GM12878 (cell line): ENCODE measurements at regions of chr1 and their contacts with region 1.

Region 1: DNA sequence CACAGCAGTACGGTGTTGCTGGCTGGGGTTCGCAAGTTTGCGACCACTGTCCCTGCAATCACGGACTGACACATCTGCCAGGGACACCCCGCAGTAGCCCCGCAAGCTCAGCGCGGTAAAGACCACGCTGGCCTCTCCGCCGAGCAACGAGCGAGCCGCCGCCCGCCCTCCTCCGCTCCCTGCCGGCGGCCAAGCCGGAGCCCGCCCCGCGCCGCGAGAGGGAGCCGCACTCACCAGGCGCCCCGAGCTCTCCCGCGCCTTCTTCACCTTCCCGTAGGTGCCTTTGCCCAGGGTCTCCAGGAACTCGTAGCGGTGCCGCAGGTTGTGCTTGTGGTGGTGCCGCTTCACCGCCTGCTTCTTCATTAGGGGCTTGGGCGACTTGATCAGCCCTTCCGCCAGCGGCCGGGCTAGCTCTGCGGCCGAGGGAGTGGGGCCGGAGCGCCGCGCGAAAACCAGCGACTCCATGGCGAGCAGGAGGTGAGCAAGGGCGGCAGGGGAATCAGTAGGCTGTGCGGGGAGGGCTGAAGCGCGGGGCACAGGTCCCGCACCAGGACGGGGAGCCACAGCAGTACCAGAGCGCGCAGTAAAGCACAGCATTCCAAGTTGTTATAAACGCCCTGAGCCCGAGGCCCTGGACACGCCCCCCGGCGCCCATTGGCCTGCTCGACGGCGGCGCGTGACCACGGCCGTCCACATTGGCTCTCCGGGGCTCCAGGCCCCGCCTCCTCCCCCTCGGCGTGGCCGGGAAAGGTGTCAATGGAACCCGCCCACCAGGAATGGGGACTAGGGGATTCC is at the start of gene NUAK2:
- DNase-seq: no peak
- ATAC-seq: peak; percentile 85
- H3K4me3 ChIP-seq: peak within 1 kb of the TSS; percentile 36; the same call in 1 of the 2 replicates
- H3K27ac ChIP-seq: no peak within 1 kb of the TSS
- H3K4me1 ChIP-seq: peaks cover 13% of the 10 kb centered on the region
- H3K27me3 ChIP-seq: peaks cover 0 to 8% of the 10 kb centered on the region in 2 experiments; a peak in 3 of 4 replicates
- CTCF ChIP-seq: peak in 1 of 3 experiments; percentile 21; a peak in 1 of 6 replicates
- EP300 ChIP-seq: no peak
- POLR2A ChIP-seq: peak; percentile 44; the same call in 1 of the 2 replicates
- RAD21 ChIP-seq: peak; percentile 9; the same call in 1 of the 2 replicates
- polyA plus RNA-seq, gene NUAK2: 0.27 to 0.31 TPM

Region 2: DNA sequence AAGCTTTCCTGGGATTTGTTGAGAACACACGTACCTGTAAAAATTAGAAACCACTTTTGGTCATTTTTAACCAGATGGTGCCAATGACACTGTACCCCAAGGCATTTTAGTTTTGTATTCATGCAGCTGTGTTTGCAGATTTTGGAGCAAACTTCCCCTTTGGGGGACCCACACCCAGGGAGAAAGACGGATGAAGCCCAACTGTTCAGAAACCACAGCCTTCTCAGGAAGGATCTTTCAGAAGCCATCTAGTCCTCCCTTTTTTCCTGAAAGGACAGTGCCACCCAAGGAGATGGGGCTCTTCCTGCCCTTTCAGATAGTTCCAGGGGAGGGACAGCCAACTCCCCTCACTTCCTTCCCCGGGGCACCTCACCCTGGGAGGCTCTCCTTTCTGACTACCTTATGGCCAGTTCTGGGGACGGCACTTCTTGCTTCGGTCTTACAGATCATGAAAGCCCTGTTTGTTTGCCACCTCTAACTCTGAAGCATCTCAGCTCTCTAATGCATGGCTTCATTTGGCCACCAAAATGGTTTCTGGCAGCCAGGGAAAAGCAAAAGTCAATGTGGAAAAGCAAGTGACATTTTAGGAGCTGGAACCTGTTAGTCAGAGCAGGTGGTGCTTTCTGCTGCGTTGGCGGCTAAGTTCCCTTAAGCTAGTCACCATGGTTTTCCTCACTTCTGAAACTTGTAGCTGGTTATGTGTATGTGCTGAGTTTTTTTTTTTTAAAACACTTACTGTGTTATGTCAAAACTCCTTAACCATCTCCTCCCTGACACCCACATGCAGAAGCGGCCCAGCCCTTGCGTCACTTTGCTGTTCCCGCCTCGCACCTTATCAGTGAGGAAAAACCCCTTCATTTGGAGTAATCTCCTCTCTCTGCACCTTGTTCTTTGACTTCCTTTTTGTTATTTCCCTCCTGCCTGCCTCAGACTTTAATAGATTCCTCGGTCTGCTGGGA is 83.6 kb before region 1 on chr1:
- CTCF ChIA-PET with region 1: interaction called, 10 read pairs
- POLR2A ChIA-PET with region 1: interaction called, 8 read pairs
- RAD21 ChIA-PET with region 1: interaction called, 6 read pairs
- SMC1A ChIA-PET with region 1: interaction called, 11 read pairs
- in situ Hi-C with region 1: no loop called
- intact Hi-C with region 1: no loop called
- DNase-seq: no peak
- ATAC-seq: peak; percentile 70
- H3K4me3 ChIP-seq: no peak overlapping the region
- H3K27ac ChIP-seq: no peak overlapping the region
- H3K4me1 ChIP-seq: peaks cover 18% of the 10 kb centered on the region
- H3K27me3 ChIP-seq: no peaks in the 10 kb centered on the region; a peak in 1 of 4 replicates
- CTCF ChIP-seq: no peak
- EP300 ChIP-seq: no peak; a peak in 1 of 4 replicates
- POLR2A ChIP-seq: no peak
- RAD21 ChIP-seq: no peak

Region 3: DNA sequence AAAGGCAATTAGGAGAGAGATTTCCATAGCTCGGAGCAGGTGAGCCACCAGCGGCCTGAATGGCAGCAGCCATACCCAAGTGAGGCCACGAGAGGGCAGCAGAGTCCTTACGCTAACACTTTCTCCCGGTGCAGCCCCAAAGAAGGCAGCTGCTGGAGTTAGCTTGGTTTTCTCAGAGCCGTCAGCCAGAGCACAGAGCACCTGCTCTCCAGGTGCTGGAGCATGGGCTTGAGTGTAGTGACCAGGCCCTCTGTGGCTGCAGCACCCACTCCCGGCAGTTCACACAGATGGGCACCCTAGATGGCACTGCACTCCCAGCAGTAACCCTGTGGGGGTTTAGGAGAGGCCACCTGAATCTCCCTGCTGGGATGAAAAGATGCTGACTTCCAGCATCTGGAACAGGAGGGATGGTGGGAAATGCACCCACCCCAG is 47.8 kb before region 1 on chr1:
- CTCF ChIA-PET with region 1: interaction called, 2,333 read pairs
- POLR2A ChIA-PET with region 1: interaction called, 91 read pairs
- RAD21 ChIA-PET with region 1: interaction called, 892 read pairs
- SMC1A ChIA-PET with region 1: interaction called, 1,445 read pairs
- in situ Hi-C with region 1: no loop called
- intact Hi-C with region 1: loop called (anchors 1 kb)
- DNase-seq: peak; percentile 32
- ATAC-seq: peak; percentile 90
- H3K4me3 ChIP-seq: no peak overlapping the region
- H3K27ac ChIP-seq: no peak overlapping the region
- H3K4me1 ChIP-seq: peaks cover 3% of the 10 kb centered on the region; the same call in 1 of the 2 replicates
- H3K27me3 ChIP-seq: peaks cover 0 to 2% of the 10 kb centered on the region in 2 experiments; a peak in 1 of 4 replicates
- CTCF ChIP-seq: peak; percentile 92 to 98 (median 98)
- EP300 ChIP-seq: peak in 1 of 2 experiments; percentile 38; a peak in 1 of 4 replicates
- POLR2A ChIP-seq: no peak
- RAD21 ChIP-seq: peak; percentile 96

Region 4: DNA sequence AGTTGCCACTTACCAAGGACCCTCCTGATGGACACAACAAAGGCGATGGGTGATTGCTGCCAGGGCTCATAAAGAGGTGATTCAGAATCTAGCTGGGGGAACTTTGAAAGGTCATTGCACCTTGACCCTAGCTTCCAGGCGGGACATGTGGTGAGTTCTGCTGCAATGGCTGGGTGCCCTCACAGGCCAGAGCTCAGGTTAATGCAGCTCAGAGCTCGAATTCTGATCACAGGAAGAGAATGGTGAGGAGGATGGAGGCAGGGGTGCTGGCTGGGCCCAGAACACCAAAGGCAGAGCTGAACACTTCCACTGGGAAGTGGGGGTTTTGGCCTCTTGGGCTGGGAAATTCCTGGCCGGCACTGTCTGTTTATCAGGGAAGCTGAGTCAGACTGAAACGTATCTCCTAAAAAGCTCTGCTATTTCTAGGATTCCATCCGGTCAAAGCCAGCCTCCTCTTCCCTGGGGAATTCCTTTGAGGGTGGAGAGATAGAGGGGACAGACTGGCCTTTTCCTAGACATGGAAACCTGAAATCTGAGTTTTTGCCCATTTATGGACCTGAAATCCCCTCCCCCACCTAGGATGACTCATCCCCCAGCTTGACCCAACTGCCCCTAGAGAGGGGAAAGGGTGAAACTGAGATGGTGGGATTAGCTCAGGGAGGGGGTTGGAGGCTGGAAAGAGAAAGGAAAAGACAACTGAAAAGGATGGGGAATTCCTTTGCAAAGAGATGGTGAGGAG is 27.0 kb before region 1 on chr1:
- CTCF ChIA-PET with region 1: interaction called, 2,333 read pairs
- POLR2A ChIA-PET with region 1: interaction called, 151 read pairs
- RAD21 ChIA-PET with region 1: interaction called, 527 read pairs
- SMC1A ChIA-PET with region 1: interaction called, 1,445 read pairs
- in situ Hi-C with region 1: no loop called
- intact Hi-C with region 1: no loop called
- DNase-seq: no peak
- ATAC-seq: peak; percentile 69
- H3K4me3 ChIP-seq: no peak overlapping the region
- H3K27ac ChIP-seq: no peak overlapping the region
- H3K4me1 ChIP-seq: peaks cover 6% of the 10 kb centered on the region
- H3K27me3 ChIP-seq: no peaks in the 10 kb centered on the region; a peak in 1 of 4 replicates
- CTCF ChIP-seq: no peak
- EP300 ChIP-seq: peak in 1 of 2 experiments; percentile 46; a peak in 1 of 4 replicates
- POLR2A ChIP-seq: no peak
- RAD21 ChIP-seq: no peak

Region 5: DNA sequence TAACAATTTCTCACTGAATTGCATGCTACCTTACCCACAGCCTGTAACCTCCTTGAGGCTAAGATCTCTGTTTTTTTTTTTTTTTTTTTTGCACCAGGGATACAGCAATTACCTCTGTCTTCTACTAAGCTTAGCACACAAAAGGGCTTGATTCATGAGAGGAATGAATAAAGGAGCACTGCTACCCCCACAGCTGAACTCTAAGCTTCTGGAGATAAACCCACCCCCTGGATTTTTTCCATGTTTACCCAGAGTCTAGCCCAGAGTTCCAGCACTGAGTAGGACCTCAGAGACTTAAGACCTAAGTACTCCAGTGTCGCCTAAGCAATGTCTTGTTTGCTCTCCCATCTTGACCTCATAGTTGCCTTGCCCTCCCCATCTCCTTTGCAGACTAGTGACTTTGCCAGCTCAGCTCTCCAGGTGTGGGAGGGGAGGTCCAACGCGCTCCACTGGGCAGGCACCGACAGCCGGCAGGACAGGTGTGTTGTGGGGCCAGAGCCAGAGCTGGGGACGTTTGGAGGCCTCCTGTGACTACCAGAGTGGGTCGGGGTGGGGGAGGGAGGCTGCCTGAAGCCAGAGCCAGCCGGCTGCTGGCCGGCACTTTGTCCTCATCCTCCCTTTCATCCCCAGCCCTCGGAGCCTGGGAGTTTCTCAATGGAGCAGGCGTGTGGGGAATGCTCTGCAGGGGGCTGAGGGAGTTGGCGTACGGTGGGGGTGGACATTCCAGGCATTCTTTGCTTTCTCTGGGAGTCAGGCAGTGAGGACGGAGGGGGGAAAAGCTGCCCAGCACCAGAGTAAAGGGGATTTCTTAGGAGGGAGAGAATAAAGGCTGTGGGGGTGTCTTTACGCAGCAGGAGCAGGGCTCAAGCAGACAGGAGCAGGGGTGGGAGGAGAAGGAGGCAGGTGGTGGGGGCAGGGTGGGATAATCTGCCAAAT is 20.2 kb before region 1 on chr1:
- CTCF ChIA-PET with region 1: interaction called, 24 read pairs
- POLR2A ChIA-PET with region 1: interaction called, 4 read pairs
- RAD21 ChIA-PET with region 1: interaction called, 9 read pairs
- SMC1A ChIA-PET with region 1: interaction called, 28 read pairs
- in situ Hi-C with region 1: no loop called
- intact Hi-C with region 1: no loop called
- DNase-seq: no peak
- ATAC-seq: peak; percentile 62
- H3K4me3 ChIP-seq: no peak overlapping the region
- H3K27ac ChIP-seq: no peak overlapping the region
- H3K4me1 ChIP-seq: no peaks in the 10 kb centered on the region
- H3K27me3 ChIP-seq: no peaks in the 10 kb centered on the region; a peak in 1 of 4 replicates
- CTCF ChIP-seq: no peak
- EP300 ChIP-seq: no peak
- POLR2A ChIP-seq: no peak
- RAD21 ChIP-seq: no peak

Region 6: DNA sequence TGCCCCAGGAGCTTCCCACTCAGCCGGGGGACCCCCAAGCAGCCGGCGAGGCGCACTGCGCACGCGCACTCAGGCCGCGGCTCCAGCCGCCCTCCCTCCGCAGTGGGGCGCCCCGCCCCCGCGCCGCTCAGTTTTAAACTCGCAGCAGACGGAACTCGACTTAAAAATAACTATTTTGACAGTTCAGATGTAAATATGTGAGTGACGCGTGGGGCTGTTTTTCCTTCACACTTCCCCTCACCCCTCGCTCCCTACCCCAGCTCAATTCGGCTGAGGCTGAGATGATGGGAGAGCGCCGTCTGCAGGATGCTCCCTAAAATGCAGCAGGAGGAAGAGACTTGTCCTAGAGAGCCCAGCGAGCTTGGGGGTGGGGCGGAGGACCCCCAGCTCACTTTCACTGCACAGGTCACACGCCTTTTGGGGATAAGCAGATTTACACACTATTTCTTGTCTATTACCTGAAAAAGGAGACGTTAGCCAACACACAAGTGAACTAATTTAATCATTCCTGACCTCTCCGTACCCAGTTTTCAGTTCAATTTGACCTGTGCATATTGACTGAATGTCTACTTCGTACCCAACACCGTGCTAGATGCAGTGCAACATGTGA is 109.4 kb after region 1 on chr1:
- CTCF ChIA-PET with region 1: interaction called, 11 read pairs
- POLR2A ChIA-PET with region 1: no interaction called
- RAD21 ChIA-PET with region 1: interaction called, 3 read pairs
- SMC1A ChIA-PET with region 1: interaction called, 4 read pairs
- in situ Hi-C with region 1: no loop called
- intact Hi-C with region 1: no loop called
- DNase-seq: peak; percentile 13
- ATAC-seq: peak; percentile 85
- H3K4me3 ChIP-seq: peak overlapping the region; percentile 54; the same call in 1 of the 2 replicates
- H3K27ac ChIP-seq: no peak overlapping the region
- H3K4me1 ChIP-seq: peaks cover 3% of the 10 kb centered on the region
- H3K27me3 ChIP-seq: peaks cover 3 to 4% of the 10 kb centered on the region in 2 experiments; a peak in 2 of 4 replicates
- CTCF ChIP-seq: peak; percentile 53 to 85 (median 72)
- EP300 ChIP-seq: peak in 1 of 2 experiments; percentile 38; a peak in 1 of 4 replicates
- POLR2A ChIP-seq: no peak
- RAD21 ChIP-seq: peak; percentile 45